ENCODE measurements at regions of chr1 and their contacts with region 1.

Region 1: GRCh38 chr1:202105539-202106276 is 17.0 kb upstream of the GPR37L1 start:
- DNase-seq: no peak

Region 2: DNA sequence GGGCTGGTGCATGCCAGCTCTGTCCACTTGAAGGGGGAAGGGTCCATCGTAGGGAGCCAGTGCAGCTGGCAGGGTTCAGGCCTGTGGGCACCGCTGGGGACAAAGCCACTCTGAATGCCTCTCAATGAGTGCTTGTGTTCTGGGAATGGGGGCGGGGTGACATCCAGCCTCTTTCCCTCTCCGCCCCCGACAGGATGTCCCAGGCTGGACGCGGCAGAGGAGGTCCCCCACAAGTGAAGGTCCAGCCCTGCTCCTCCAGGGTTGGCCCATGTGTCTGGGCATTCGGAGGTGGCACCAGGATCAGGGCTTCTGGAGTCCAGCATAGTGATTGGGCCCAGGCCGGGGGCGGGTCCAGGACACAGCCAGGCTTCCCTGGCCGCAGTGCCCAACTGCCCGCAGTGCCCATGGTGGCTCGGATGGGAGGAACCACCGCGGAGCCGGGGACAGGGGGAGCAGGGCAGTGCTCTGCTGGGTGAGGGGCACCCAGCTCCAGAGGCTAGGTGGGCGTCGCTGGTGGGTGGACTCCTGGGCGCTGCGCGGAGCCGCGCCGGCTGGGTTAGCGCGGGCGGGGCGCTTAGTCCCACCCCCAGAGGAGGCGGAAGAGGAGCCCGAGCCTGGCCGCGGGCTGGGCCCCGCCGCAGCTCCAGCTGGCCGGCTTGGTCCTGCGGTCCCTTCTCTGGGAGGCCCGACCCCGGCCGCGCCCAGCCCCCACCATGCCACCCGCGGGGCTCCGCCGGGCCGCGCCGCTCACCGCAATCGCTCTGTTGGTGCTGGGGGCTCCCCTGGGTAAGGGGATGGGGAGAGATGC is 217.2 kb before region 1 on chr1 and contains the start of gene SHISA4:
- intact Hi-C with region 1: loop called (anchors 5 kb)
- DNase-seq: peak; percentile 92
- total RNA-seq, gene SHISA4: 123 TPM

Region 3: DNA sequence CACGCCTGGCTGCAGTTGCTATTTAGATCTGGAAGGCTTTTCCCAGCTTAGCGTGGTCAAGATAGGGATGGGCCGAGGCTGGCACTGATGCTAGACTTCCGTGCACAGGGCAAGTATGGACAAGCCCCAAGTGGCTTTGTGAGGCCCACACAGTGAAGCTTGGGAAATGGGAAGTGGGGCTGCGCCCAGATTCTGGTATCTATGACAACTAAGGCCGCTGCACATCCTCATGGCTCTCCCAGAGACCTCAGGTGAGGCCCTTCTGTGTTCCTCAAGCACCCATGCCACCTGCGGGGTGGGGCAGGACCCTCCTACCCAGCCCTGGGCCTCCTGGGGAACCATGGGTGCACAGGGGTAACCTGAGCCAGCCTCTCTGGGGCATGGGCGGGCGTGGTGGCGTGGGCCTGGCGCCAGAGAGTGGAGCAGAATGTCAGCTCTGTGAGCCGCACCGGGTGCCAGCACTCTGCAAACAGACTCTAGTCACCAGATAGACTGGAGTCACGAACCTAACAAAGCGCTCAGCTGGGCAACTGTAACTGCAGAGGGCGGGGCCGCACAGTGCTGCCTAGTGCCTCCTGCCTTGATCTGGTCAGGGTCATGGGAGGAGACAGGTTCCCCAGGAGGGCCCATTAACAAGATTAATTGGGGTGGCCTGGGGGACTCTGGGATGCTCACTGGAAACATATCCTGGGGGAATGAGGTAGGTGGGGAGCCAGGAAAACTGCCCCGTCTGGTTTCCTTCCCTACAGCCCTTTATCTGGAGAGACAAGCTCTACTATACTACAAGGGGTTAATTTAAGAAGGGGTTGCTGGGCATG is 48.9 kb before region 1 on chr1:
- intact Hi-C with region 1: loop called (anchors 5 kb)
- DNase-seq: no peak